ENCODE measurements at regions of chr2 and their contacts with region 1.

Region 1: GRCh38 chr2:232292395-232293154 is 86.0 kb upstream of the ALPP start:
- DNase-seq: peak; percentile 57
- H3K4me3 ChIP-seq: no peak overlapping the region
- H3K27ac ChIP-seq: no peak overlapping the region
- H3K4me1 ChIP-seq: no peaks in the 10 kb centered on the region
- H3K27me3 ChIP-seq: no peaks in the 10 kb centered on the region
- CTCF ChIP-seq: peak; percentile 73 to 89
- POLR2A ChIP-seq: no peak

Region 2: DNA sequence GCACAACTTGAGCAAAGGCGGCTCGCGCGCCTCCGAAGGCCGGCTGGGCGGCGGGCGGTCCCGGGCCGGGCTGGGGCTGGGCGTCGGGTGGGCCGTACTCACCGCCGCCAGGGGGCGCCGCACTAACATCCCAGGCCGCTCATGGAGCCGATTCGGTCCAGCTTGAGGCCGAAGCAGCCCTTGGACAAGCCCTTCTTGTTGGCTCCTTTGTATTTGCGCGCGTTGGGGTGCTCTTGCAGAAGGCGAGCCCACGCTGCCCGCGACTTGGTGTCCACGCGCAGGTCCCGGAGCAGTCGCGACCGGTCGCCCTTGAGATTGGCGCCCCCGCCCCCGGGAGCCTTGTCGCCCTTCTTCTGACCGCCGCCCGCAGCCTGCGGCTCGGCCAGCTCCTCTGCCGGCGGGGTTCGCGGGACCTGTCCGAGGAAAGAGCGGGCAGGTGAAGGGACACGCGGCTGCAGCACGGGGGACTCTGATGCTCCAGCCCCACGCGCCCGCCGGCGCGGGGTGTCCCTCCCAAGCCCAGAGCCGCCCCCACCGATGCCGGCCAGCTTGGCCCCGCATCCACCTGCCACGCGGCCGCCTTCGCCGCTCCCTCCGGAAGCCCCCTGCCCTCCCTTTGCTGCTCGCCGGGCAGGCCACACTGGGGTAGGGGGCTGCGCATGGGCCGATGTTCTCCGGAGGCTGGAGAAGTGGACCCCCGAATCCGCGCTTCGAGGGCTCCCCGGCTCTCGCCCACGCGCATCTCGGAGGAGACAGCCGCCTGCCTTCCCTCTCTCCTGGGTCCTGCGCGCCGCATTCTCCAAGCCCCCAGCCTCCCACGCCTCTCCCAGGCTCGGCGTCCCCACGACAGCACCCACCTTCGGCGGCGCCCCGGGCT is 367.0 kb before region 1 on chr2:
- CTCF ChIA-PET with region 1: interaction called, 33 read pairs
- POLR2A ChIA-PET with region 1: no interaction called
- dilution Hi-C with region 1: no loop called
- intact Hi-C with region 1: loop called (anchors 1 kb)
- DNase-seq: peak; percentile 76
- H3K4me3 ChIP-seq: peak overlapping the region in 2 of 3 experiments; percentile 30 to 45
- H3K27ac ChIP-seq: no peak overlapping the region
- H3K4me1 ChIP-seq: peaks cover 15% of the 10 kb centered on the region
- H3K27me3 ChIP-seq: peaks cover 43 to 51% of the 10 kb centered on the region in 2 experiments
- CTCF ChIP-seq: peak; percentile 82 to 88
- POLR2A ChIP-seq: no peak

Region 3: DNA sequence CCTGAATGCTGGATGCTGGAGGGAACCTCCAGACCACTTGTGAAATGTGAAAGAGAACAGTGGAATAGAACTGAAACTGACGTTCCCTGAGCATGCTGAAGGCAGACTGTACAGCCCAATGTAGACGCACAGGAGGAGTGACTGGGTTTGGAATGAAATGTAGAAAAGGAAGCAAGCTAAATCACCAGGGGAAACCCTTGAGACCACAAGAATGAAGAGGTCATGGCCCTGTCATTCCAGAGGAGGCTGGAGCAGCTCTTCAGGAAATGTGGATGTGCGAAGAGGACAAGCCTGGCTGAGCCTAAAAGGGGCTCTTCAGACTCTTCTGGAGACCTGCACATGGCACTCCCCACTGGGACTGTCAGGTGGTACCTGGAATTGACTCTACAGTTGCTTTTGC is 32.5 kb before region 1 on chr2:
- CTCF ChIA-PET with region 1: interaction called, 4 read pairs
- POLR2A ChIA-PET with region 1: no interaction called
- dilution Hi-C with region 1: no loop called
- intact Hi-C with region 1: loop called (anchors 2 kb)
- DNase-seq: peak; percentile 84
- H3K4me3 ChIP-seq: peak overlapping the region in 1 of 3 experiments; percentile 17
- H3K27ac ChIP-seq: peak overlapping the region; percentile 30
- H3K4me1 ChIP-seq: peaks cover 22% of the 10 kb centered on the region
- H3K27me3 ChIP-seq: no peaks in the 10 kb centered on the region
- CTCF ChIP-seq: no peak
- POLR2A ChIP-seq: no peak

Region 4: GRCh38 chr2:232310121-232310520 is 17.5 kb after region 1 on chr2:
- CTCF ChIA-PET with region 1: interaction called, 34 read pairs
- POLR2A ChIA-PET with region 1: no interaction called
- dilution Hi-C with region 1: no loop called
- intact Hi-C with region 1: no loop called
- DNase-seq: no peak
- H3K4me3 ChIP-seq: no peak overlapping the region
- H3K27ac ChIP-seq: no peak overlapping the region
- H3K4me1 ChIP-seq: peaks cover 10% of the 10 kb centered on the region
- H3K27me3 ChIP-seq: no peaks in the 10 kb centered on the region
- CTCF ChIP-seq: no peak
- POLR2A ChIP-seq: no peak

Region 5: GRCh38 chr2:232327105-232328041 is 34.8 kb after region 1 on chr2:
- CTCF ChIA-PET with region 1: interaction called, 24 read pairs
- POLR2A ChIA-PET with region 1: no interaction called
- dilution Hi-C with region 1: no loop called
- intact Hi-C with region 1: loop called (anchors 1 kb)
- DNase-seq: peak; percentile 73
- H3K4me3 ChIP-seq: no peak overlapping the region
- H3K27ac ChIP-seq: no peak overlapping the region
- H3K4me1 ChIP-seq: no peaks in the 10 kb centered on the region
- H3K27me3 ChIP-seq: no peaks in the 10 kb centered on the region
- CTCF ChIP-seq: peak; percentile 74 to 86
- POLR2A ChIP-seq: no peak

Region 6: DNA sequence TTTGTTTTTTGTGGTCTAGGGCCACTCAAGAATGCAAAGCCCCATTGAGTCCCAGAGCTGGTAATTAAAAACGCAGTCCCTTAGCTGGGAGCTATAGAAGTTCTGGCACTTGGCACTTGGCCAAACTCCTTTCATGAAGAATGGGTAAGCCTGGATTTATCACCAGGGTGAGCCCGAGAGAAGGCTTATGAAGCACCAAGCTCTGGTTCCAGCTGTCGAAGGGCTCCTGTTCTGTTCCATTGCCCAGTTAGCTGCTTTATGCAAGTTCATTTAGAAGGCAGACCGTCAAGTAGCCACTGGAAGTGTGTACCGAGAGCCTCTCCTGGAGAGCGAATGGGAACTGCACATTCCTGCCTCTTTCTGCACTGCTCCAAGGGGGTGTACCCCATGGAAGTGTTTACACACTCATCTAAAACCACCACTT is 180.9 kb after region 1 on chr2:
- CTCF ChIA-PET with region 1: no interaction called
- POLR2A ChIA-PET with region 1: no interaction called
- dilution Hi-C with region 1: no loop called
- intact Hi-C with region 1: no loop called
- DNase-seq: no peak
- H3K4me3 ChIP-seq: no peak overlapping the region
- H3K27ac ChIP-seq: no peak overlapping the region
- H3K4me1 ChIP-seq: no peaks in the 10 kb centered on the region
- H3K27me3 ChIP-seq: peaks cover 18 to 28% of the 10 kb centered on the region in 2 experiments
- CTCF ChIP-seq: no peak
- POLR2A ChIP-seq: no peak

Measured in endothelial cell of umbilical vein (primary cell).